PC-3 (cell line): ENCODE measurements at regions of chr1 and their contacts with region 1.

Region 1: GRCh38 chr1:239914751-239915231 is 176.9 kb upstream of the FMN2 start:
- DNase-seq: peak; percentile 98
- ATAC-seq: peak; percentile 83
- H3K4me3 ChIP-seq: no peak overlapping the region
- H3K27ac ChIP-seq: peak overlapping the region; percentile 73
- H3K4me1 ChIP-seq: peaks cover 44% of the 10 kb centered on the region
- H3K27me3 ChIP-seq: no peaks in the 10 kb centered on the region
- CTCF ChIP-seq: peak; percentile 50

Region 2: GRCh38 chr1:239719642-239720258 is 195.0 kb before region 1 on chr1:
- CTCF ChIA-PET with region 1: no interaction called
- POLR2A ChIA-PET with region 1: no interaction called
- intact Hi-C with region 1: loop called (anchors 5 kb)
- DNase-seq: no peak
- ATAC-seq: no peak
- H3K4me3 ChIP-seq: no peak overlapping the region
- H3K27ac ChIP-seq: no peak overlapping the region
- H3K4me1 ChIP-seq: peaks cover 18% of the 10 kb centered on the region
- H3K27me3 ChIP-seq: no peaks in the 10 kb centered on the region
- CTCF ChIP-seq: no peak

Region 3: DNA sequence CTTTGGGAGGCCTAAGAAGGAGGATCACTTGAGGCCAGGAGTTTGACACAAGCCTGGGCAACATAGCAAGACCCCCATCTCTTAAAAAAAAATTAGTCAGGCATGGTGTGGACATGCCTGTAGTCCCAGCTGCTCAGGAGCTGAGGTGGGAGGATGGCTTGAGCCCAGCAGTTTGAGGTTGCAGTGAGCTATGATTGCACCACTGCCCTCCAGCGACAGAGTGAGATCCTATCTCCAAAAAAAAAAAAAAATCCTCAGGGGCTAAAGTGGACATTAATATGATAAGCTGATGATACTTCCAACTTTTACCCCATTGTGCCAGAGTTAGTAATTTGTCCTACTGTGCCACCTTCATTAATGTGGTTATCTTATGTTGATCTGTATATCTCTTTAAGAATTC is 150.9 kb before region 1 on chr1:
- CTCF ChIA-PET with region 1: no interaction called
- POLR2A ChIA-PET with region 1: no interaction called
- intact Hi-C with region 1: no loop called
- DNase-seq: no peak
- ATAC-seq: no peak
- H3K4me3 ChIP-seq: no peak overlapping the region
- H3K27ac ChIP-seq: no peak overlapping the region
- H3K4me1 ChIP-seq: no peaks in the 10 kb centered on the region
- H3K27me3 ChIP-seq: no peaks in the 10 kb centered on the region
- CTCF ChIP-seq: 0 out of 2 replicates have a peak, but pooled peaks have one; percentile 26

Region 4: GRCh38 chr1:239976130-239976968 is 61.6 kb after region 1 on chr1:
- CTCF ChIA-PET with region 1: interaction called, 3 read pairs
- POLR2A ChIA-PET with region 1: no interaction called
- intact Hi-C with region 1: loop called (anchors 5 kb)
- DNase-seq: peak; percentile 86
- ATAC-seq: peak; percentile 84
- H3K4me3 ChIP-seq: no peak overlapping the region
- H3K27ac ChIP-seq: no peak overlapping the region
- H3K4me1 ChIP-seq: peaks cover 6% of the 10 kb centered on the region; the same call in 1 of the 2 replicates
- H3K27me3 ChIP-seq: peaks cover under 1% of the 10 kb centered on the region; the same call in 1 of the 2 replicates
- CTCF ChIP-seq: peak; percentile 99